PC-9 (cell line): ENCODE measurements at regions of chr11 and their contacts with region 1.

Region 1: DNA sequence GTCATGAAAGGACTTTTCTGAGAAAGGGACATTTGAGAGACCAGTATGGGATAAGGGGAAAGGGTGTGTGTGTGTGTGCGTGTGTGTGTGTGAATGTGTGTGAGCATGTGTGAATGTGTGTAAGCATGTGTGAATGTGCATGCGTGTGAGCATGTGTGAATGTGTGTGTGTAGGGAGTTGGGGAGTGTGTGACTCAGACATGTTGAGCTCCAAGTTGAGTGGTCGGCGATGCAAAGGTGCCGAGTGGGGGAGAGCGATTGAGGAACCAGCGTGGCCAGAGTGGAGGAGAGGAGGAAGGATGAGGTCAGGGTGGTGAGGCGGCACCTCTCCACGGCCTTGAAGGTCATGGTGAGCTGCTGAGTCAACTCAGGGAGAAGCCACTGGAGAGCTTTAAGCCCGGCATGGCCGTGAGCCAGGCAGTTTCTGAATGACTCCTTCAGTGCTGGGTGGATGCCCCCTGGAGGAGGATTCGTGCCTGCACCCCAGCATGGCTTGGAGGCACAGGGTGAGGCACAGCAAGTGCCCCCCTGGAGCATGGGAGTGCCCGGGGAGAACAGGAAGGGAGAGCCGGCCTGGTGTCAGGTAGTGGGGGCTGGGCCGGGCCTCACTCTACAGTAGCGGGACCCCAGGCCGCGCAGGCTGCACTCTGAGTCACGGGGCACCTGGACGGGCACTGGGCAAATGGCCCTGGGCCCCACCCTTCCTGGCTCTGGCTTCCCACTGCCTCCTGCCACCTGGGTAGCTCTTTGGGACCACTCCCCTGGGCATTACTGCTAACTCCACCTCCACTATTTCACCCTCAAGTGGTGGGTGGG is 8.2 kb upstream of the CCDC88B start:
- DNase-seq: peak; percentile 97 to 99
- H3K4me3 ChIP-seq: no peak overlapping the region; the same call in 1 of the 2 replicates
- H3K27ac ChIP-seq: peak overlapping the region; percentile 83
- H3K4me1 ChIP-seq: peaks cover 51% of the 10 kb centered on the region
- H3K27me3 ChIP-seq: no peaks in the 10 kb centered on the region
- CTCF ChIP-seq: peak; percentile 88

Region 2: GRCh38 chr11:64409707-64410403 is 78.1 kb after region 1 on chr11:
- CTCF ChIA-PET with region 1: interaction called, 15 read pairs
- POLR2A ChIA-PET with region 1: no interaction called
- intact Hi-C with region 1: no loop called
- DNase-seq: no peak
- H3K4me3 ChIP-seq: no peak overlapping the region
- H3K27ac ChIP-seq: no peak overlapping the region
- H3K4me1 ChIP-seq: peaks cover 7% of the 10 kb centered on the region; the same call in 1 of the 2 replicates
- H3K27me3 ChIP-seq: no peaks in the 10 kb centered on the region
- CTCF ChIP-seq: no peak